Heart right ventricle (tissue), 16 donors: ENCODE measurements at regions of chr16 and their contacts with region 1.

Region 1: GRCh38 chr16:26175944-26176343 is 484.2 kb downstream of the HS3ST4 start:
- DNase-seq: no peak
- ATAC-seq: peak in 2 of 8 donors; percentile 52 to 74
- H3K4me3 ChIP-seq: no peak overlapping the region
- H3K27ac ChIP-seq: no peak overlapping the region
- H3K4me1 ChIP-seq: no peaks in the 10 kb centered on the region
- H3K27me3 ChIP-seq: no peaks in the 10 kb centered on the region
- CTCF ChIP-seq: no peak

Region 2: DNA sequence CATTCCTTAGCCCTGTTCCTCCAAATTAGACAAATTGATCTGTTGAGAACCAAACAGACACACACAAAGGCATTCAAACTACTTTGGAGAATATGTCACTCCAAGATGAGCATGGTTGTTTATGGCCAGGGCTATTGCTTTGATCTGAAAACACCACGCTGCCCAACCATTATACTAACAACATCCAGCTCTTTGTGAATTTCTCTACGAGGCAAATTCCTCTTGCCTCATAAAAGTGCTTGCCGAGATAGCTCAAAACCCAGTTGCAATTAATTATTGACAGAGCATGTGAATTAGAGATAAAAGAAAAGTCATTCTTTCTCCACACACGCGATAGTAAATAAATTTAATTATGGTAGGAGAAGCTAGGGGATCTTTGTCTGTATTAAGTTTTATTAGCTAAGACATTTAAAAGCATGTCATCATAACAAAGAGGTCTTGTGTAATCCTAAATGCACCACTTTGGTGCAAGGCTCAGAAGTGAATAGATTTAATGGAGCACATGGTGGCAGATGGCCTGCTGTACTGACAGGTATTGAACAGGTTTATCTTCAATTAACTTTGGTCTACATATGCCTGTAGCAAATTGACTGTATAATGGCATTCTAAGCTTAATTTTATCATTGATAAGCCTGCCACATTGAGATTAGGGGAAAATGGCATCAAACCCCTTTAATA is 42.4 kb before region 1 on chr16:
- intact Hi-C with region 1: no loop called
- DNase-seq: no peak
- ATAC-seq: no peak
- H3K4me3 ChIP-seq: no peak overlapping the region
- H3K27ac ChIP-seq: no peak overlapping the region
- H3K4me1 ChIP-seq: no peaks in the 10 kb centered on the region
- H3K27me3 ChIP-seq: peaks cover 0 to 2% (median 0%) of the 10 kb centered on the region in 7 donors
- CTCF ChIP-seq: no peak

Region 3: GRCh38 chr16:26231647-26232046 is 55.7 kb after region 1 on chr16:
- intact Hi-C with region 1: no loop called
- DNase-seq: no peak
- ATAC-seq: no peak
- H3K4me3 ChIP-seq: no peak overlapping the region
- H3K27ac ChIP-seq: no peak overlapping the region
- H3K4me1 ChIP-seq: no peaks in the 10 kb centered on the region
- H3K27me3 ChIP-seq: peaks cover 0 to 3% (median 0%) of the 10 kb centered on the region in 7 donors
- CTCF ChIP-seq: no peak

Region 4: DNA sequence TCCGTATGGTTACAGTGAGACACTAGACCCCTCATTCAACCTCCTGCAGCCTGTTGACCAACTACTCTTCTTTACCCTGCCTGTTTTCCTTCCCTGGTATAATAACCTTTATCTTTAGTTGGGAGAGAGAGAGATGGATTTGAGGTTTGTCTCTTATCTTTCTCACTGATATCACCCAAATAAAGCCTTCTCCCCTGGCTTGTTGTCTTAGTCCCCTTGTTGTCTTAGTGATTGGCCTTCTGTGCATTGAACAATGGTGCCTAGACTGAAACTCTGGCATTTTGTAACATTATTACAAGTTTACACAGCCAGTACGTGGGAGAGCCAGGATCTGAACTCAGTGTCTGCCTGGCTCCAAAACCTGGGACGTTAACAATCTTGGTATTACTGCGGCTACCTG is 76.7 kb after region 1 on chr16:
- intact Hi-C with region 1: no loop called
- DNase-seq: no peak
- ATAC-seq: no peak
- H3K4me3 ChIP-seq: no peak overlapping the region
- H3K27ac ChIP-seq: no peak overlapping the region
- H3K4me1 ChIP-seq: no peaks in the 10 kb centered on the region
- H3K27me3 ChIP-seq: peaks cover 0 to 7% (median 0%) of the 10 kb centered on the region in 7 donors
- CTCF ChIP-seq: no peak

Region 5: DNA sequence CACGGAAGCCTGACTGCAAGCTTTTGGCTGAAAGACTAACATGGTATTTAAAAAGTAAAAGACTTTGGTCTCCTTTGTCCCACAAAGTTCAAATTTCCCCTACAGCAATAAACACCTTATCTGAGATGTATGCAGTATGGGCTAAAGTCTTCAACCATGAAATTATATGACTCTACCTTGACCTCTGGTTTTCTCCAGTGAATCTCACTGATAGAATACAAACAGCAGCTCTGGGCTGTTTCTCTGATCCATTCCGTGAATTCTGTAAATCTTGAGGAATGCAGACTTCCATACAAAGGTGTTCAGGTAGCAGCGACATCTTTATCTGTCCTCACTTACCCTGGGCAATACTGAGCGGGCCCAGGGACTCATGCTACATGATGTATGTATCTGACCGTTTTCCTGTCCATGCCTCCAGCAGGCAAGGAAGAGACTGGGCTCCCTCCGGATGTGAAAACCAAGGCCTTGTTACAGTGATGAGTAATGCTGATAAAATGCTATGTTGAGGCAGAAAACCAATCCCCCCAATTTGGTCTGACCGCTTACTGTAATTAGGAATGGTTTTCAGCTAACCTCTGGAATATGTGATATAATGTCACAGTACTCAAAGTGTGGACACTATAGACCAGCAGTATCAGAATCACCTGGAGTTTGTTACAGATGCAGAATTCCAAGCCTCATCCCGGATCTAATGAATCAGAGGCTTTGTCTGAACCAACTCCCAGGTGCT is 105.6 kb after region 1 on chr16:
- intact Hi-C with region 1: loop called in 1 of 10 experiments (anchors 5 kb)
- DNase-seq: no peak
- ATAC-seq: no peak
- H3K4me3 ChIP-seq: no peak overlapping the region
- H3K27ac ChIP-seq: no peak overlapping the region
- H3K4me1 ChIP-seq: no peaks in the 10 kb centered on the region
- H3K27me3 ChIP-seq: no peaks in the 10 kb centered on the region
- CTCF ChIP-seq: no peak